Activated B cell treated with CpG ODN at 0.5 μM for 24 hours (primary cell): ENCODE measurements at regions of chr12 and their contacts with region 1.

Region 1: DNA sequence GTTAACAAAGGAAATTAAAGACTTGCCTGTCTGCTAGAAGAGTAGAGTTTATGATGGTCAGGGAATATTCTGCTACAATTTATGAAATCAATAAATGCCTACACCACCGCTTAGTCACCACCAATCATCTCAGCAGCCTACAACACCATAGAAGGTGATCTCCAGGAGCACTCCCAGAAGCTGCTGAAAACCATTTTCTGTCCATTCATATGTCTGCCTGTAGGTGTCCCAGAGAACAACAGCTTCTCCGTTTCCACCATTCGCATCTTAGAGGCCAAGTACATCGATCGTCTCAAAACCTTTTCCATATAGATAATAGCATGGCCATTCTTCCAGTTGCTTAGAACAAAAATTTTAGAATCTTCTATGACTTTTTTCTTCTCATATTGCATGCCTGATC is 303.4 kb downstream of the KCNC2 start:
- DNase-seq: no peak
- ATAC-seq: no peak
- H3K4me3 Mint-ChIP-seq: no peak overlapping the region
- H3K27ac Mint-ChIP-seq: no peak overlapping the region
- H3K4me1 Mint-ChIP-seq: no peaks in the 10 kb centered on the region
- H3K27me3 Mint-ChIP-seq: no peaks in the 10 kb centered on the region
- CTCF ChIP-seq: no peak

Region 2: DNA sequence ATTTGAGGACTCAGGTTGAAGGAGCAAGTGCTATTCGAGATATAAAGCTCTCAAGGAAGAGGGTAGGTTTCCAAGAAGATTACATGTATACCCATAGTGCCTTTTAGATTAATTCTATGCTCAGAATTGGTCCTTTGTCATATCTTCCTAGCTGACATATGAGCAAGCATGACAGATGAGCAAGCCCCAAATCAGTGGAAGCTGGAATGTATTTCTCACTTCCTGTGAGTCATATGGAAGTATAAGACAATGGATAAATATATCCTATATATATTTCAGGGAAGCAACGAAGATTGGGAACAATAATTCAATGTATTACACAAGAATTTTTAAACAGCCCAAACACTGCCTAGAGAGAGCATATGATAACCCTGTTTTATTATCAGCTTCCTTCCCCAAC is 1042.7 kb before region 1 on chr12:
- CTCF ChIA-PET with region 1: no interaction called
- POLR2A ChIA-PET with region 1: no interaction called
- intact Hi-C with region 1: loop called (anchors 5 kb)
- DNase-seq: no peak
- ATAC-seq: no peak
- H3K4me3 Mint-ChIP-seq: no peak overlapping the region
- H3K27ac Mint-ChIP-seq: no peak overlapping the region
- H3K4me1 Mint-ChIP-seq: no peaks in the 10 kb centered on the region
- H3K27me3 Mint-ChIP-seq: no peaks in the 10 kb centered on the region
- CTCF ChIP-seq: no peak